ENCODE measurements at regions of chr1 and their contacts with region 1.

Region 1: GRCh38 chr1:40862008-40862863 is at the start of gene CITED4:
- DNase-seq: peak; percentile 93
- ATAC-seq: peak; percentile 98
- H3K4me3 Mint-ChIP-seq: peak within 1 kb of the TSS; percentile 94
- H3K27ac Mint-ChIP-seq: peak within 1 kb of the TSS; percentile 82
- H3K4me1 Mint-ChIP-seq: peaks cover 10% of the 10 kb centered on the region
- H3K27me3 Mint-ChIP-seq: peaks cover 12% of the 10 kb centered on the region
- CTCF ChIP-seq: no peak
- total RNA-seq, gene CITED4: 0.54 and 0.98 TPM in 2 replicates

Region 2: GRCh38 chr1:39575191-39576015 is 1286.8 kb before region 1 on chr1:
- CTCF ChIA-PET with region 1: no interaction called
- POLR2A ChIA-PET with region 1: no interaction called
- intact Hi-C with region 1: loop called (anchors 5 kb)
- DNase-seq: peak; percentile 33
- ATAC-seq: peak; percentile 23
- H3K4me3 Mint-ChIP-seq: peak overlapping the region; percentile 89
- H3K27ac Mint-ChIP-seq: peak overlapping the region; percentile 82
- H3K4me1 Mint-ChIP-seq: peaks cover 35% of the 10 kb centered on the region
- H3K27me3 Mint-ChIP-seq: no peaks in the 10 kb centered on the region
- CTCF ChIP-seq: no peak

Region 3: GRCh38 chr1:40243351-40243750 is 618.9 kb before region 1 on chr1:
- CTCF ChIA-PET with region 1: no interaction called
- POLR2A ChIA-PET with region 1: no interaction called
- intact Hi-C with region 1: no loop called
- DNase-seq: no peak
- ATAC-seq: no peak
- H3K4me3 Mint-ChIP-seq: no peak overlapping the region
- H3K27ac Mint-ChIP-seq: no peak overlapping the region
- H3K4me1 Mint-ChIP-seq: peaks cover 11% of the 10 kb centered on the region
- H3K27me3 Mint-ChIP-seq: no peaks in the 10 kb centered on the region
- CTCF ChIP-seq: no peak

Region 4: DNA sequence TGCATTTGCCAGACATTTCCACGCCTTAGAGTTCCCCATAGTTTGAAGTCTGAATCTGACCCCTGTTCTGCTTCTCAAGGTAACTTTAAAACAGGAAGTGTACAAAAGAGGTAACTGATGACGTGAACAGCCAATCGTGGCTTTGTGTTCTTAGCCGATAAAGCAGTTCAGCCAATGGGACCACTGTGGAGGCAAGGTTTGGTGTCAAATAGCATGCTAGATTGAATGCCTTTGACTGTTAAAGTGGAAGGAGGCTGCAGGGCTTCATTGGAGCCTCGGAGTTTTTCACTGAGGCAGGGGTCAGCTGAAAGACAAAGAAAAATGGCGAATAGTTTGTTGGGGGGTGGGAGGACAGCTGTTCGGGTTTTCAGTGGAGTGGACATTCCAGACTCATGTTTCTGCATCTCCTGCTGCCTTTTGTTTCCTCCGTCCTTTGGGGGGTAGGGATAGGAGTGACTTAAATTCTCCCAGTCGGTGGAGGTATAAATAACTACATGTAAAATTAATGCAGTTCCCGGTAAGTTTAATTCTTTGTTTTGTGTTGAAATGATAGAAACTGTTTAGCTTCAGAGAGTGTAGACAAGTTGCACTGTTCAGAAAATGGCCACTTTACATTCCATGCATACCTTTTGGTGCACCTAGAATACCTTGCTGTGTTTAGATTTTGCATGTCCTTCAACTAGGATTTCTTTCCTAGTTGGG is 153.0 kb before region 1 on chr1:
- CTCF ChIA-PET with region 1: no interaction called
- POLR2A ChIA-PET with region 1: no interaction called
- intact Hi-C with region 1: no loop called
- DNase-seq: peak; percentile 30
- ATAC-seq: peak; percentile 89
- H3K4me3 Mint-ChIP-seq: peak overlapping the region; percentile 95
- H3K27ac Mint-ChIP-seq: peak overlapping the region; percentile 95
- H3K4me1 Mint-ChIP-seq: peaks cover 75% of the 10 kb centered on the region
- H3K27me3 Mint-ChIP-seq: no peaks in the 10 kb centered on the region
- CTCF ChIP-seq: no peak

Region 5: GRCh38 chr1:40802078-40802741 is 60.0 kb before region 1 on chr1:
- CTCF ChIA-PET with region 1: no interaction called
- POLR2A ChIA-PET with region 1: no interaction called
- intact Hi-C with region 1: loop called (anchors 1 kb)
- DNase-seq: peak; percentile 75
- ATAC-seq: peak; percentile 96
- H3K4me3 Mint-ChIP-seq: peak overlapping the region; percentile 77
- H3K27ac Mint-ChIP-seq: peak overlapping the region; percentile 68
- H3K4me1 Mint-ChIP-seq: peaks cover 33% of the 10 kb centered on the region
- H3K27me3 Mint-ChIP-seq: no peaks in the 10 kb centered on the region
- CTCF ChIP-seq: no peak

Region 6: GRCh38 chr1:40818264-40818961 is 43.8 kb before region 1 on chr1:
- CTCF ChIA-PET with region 1: no interaction called
- POLR2A ChIA-PET with region 1: no interaction called
- intact Hi-C with region 1: loop called (anchors 1 kb)
- DNase-seq: peak; percentile 68
- ATAC-seq: peak; percentile 99
- H3K4me3 Mint-ChIP-seq: peak overlapping the region; percentile 85
- H3K27ac Mint-ChIP-seq: peak overlapping the region; percentile 66
- H3K4me1 Mint-ChIP-seq: peaks cover 13% of the 10 kb centered on the region
- H3K27me3 Mint-ChIP-seq: no peaks in the 10 kb centered on the region
- CTCF ChIP-seq: no peak

Region 7: DNA sequence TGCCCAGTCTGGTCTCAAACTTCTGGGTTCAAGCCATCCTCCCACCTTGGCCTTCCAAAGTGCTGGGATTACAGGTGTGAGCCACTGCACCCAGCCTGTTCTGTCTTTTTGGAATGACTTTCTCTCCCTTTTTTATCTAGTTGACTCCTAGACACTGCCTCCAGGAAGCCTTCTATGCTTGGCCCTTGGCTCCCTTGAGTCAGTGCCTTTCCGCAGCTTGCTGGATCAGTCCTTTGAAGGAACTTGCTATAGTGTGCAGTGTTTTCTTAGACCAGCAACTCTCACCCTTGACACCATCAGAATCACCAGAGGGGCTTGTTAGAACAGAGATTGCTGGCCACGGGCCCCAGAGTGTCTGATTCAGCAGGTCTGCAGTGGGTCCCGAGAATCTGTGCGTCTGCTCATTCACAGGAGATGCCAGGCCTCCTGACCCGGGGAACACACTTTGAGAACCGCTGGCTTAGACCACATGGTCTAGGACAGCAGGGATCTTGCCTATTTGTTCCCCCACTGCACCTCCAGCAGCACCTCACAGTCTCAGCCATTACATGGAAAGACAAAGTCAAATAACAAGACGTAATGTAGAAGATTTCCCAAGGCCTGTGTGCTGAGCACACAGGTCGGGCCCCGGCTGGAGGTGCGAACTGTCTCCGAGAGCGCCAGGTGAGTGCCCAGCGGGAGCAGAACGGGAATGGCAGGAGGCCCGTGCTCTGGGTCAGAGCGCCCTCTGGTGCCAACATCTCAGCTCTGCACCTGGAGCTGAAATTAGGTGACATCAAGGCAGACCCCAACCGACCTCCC is 89.9 kb after region 1 on chr1:
- CTCF ChIA-PET with region 1: interaction called, 4 read pairs
- POLR2A ChIA-PET with region 1: no interaction called
- intact Hi-C with region 1: loop called (anchors 2 kb)
- DNase-seq: peak; percentile 47
- ATAC-seq: peak; percentile 64
- H3K4me3 Mint-ChIP-seq: no peak overlapping the region
- H3K27ac Mint-ChIP-seq: peak overlapping the region; percentile 42
- H3K4me1 Mint-ChIP-seq: peaks cover 5% of the 10 kb centered on the region
- H3K27me3 Mint-ChIP-seq: peaks cover 36% of the 10 kb centered on the region
- CTCF ChIP-seq: peak; percentile 23

Region 8: GRCh38 chr1:40979233-40980067 is 117.2 kb after region 1 on chr1 and contains the start of gene CTPS1:
- CTCF ChIA-PET with region 1: no interaction called
- POLR2A ChIA-PET with region 1: interaction called, 3 read pairs
- intact Hi-C with region 1: loop called (anchors 1 kb)
- DNase-seq: peak; percentile 95
- ATAC-seq: peak; percentile 86
- H3K4me3 Mint-ChIP-seq: peak within 1 kb of the TSS; percentile 94
- H3K27ac Mint-ChIP-seq: peak within 1 kb of the TSS; percentile 92
- H3K4me1 Mint-ChIP-seq: peaks cover 19% of the 10 kb centered on the region
- H3K27me3 Mint-ChIP-seq: no peaks in the 10 kb centered on the region
- CTCF ChIP-seq: no peak
- total RNA-seq, gene CTPS1: 39.5 and 43.0 TPM in 2 replicates

Region 9: GRCh38 chr1:41540886-41541591 is 678.8 kb after region 1 on chr1:
- CTCF ChIA-PET with region 1: no interaction called
- POLR2A ChIA-PET with region 1: no interaction called
- intact Hi-C with region 1: no loop called
- DNase-seq: peak; percentile 14
- ATAC-seq: no peak
- H3K4me3 Mint-ChIP-seq: no peak overlapping the region
- H3K27ac Mint-ChIP-seq: no peak overlapping the region
- H3K4me1 Mint-ChIP-seq: peaks cover 59% of the 10 kb centered on the region
- H3K27me3 Mint-ChIP-seq: no peaks in the 10 kb centered on the region
- CTCF ChIP-seq: no peak

Measured in activated B cell treated with CpG ODN at 0.5 μM for 24 hours (primary cell).